Aorta (tissue), 5 donors: ENCODE measurements at regions of chr2 and their contacts with region 1.

Region 1: GRCh38 chr2:37005118-37005868 is 39.0 kb upstream of the STRN start:
- DNase-seq: no peak
- ATAC-seq: no peak
- H3K4me3 ChIP-seq: no peak overlapping the region
- H3K27ac ChIP-seq: no peak overlapping the region
- H3K4me1 ChIP-seq: no peaks in the 10 kb centered on the region
- H3K27me3 ChIP-seq: no peaks in the 10 kb centered on the region

Region 2: DNA sequence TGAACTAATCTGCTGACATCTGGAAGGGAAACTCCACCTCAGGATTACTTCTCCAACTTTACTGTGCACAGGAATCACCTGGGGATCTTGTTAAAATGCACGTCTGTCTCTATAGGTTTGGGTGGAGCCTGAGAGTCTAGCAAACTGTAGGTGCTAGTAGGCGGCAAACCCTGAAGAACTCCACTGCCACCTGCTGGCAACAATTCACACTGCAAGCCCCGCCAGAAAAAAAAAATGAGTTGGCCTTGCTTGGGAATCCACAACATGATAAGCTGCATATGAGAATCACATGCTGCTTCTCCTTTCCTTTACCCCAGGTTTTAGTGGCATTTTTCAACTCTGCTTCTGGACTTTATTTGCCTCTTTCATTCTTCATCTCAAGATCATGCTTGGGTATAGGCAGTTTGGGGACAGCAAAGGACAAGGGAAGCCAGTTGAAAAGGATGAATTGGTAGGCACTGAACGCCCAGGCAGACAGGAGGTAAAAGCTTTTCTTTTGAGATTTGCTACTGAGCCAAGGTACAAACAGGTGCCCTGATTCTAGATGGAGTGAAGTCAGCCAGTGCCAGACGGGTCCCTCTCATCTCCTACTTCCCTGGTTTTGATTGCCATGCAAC is 220.0 kb before region 1 on chr2:
- intact Hi-C with region 1: loop called (anchors 10 kb)
- DNase-seq: no peak
- ATAC-seq: peak; percentile 72
- H3K4me3 ChIP-seq: no peak overlapping the region
- H3K27ac ChIP-seq: no peak overlapping the region
- H3K4me1 ChIP-seq: no peaks in the 10 kb centered on the region
- H3K27me3 ChIP-seq: no peaks in the 10 kb centered on the region